Activated B cell treated with CpG ODN at 0.5 μM for 24 hours (primary cell): ENCODE measurements at regions of chr6 and their contacts with region 1.

Region 1: DNA sequence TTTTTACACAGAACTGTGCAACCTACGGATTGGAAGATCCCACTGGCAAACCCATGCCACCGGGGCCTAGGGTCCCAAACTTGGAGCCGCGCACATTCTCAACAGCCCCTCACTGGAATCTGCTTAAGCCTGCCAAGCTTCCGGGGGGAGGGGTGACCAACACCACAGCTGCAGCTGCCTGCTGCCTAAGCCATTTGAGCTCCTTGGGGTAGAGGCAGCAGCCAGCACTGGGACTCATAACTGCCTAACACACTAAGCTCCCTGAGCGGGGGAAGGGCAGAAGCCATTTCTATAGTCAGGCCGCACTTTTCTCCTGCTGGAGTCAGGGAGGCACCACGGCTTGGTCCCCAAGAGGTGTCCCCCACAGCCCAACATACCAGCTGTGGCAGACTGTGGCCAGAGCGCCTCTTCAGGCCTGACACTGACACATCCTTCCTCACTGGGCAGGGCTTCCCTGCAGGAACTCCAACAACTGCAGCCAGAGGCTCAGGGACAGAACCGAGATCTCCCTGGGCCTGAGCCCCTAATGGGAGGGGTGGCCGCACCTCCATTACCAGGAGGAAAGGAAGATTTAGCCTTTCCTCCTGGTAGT is 270.3 kb upstream of the ECI2 start:
- DNase-seq: no peak
- ATAC-seq: no peak
- H3K4me3 Mint-ChIP-seq: no peak overlapping the region
- H3K27ac Mint-ChIP-seq: no peak overlapping the region
- H3K4me1 Mint-ChIP-seq: peaks cover 46% of the 10 kb centered on the region
- H3K27me3 Mint-ChIP-seq: peaks cover 7% of the 10 kb centered on the region
- CTCF ChIP-seq: no peak

Region 2: GRCh38 chr6:4336778-4337442 is 68.8 kb before region 1 on chr6:
- CTCF ChIA-PET with region 1: no interaction called
- POLR2A ChIA-PET with region 1: no interaction called
- intact Hi-C with region 1: loop called (anchors 5 kb)
- DNase-seq: no peak
- ATAC-seq: peak; percentile 66
- H3K4me3 Mint-ChIP-seq: no peak overlapping the region
- H3K27ac Mint-ChIP-seq: peak overlapping the region; percentile 30
- H3K4me1 Mint-ChIP-seq: peaks cover 17% of the 10 kb centered on the region
- H3K27me3 Mint-ChIP-seq: no peaks in the 10 kb centered on the region
- CTCF ChIP-seq: no peak

Region 3: GRCh38 chr6:4707011-4707410 is 301.3 kb after region 1 on chr6:
- CTCF ChIA-PET with region 1: no interaction called
- POLR2A ChIA-PET with region 1: no interaction called
- intact Hi-C with region 1: no loop called
- DNase-seq: no peak
- ATAC-seq: no peak
- H3K4me3 Mint-ChIP-seq: no peak overlapping the region
- H3K27ac Mint-ChIP-seq: no peak overlapping the region
- H3K4me1 Mint-ChIP-seq: no peaks in the 10 kb centered on the region
- H3K27me3 Mint-ChIP-seq: no peaks in the 10 kb centered on the region
- CTCF ChIP-seq: no peak